ENCODE measurements at regions of chr15 and their contacts with region 1.

Region 1: GRCh38 chr15:80710635-80711554 is 15.8 kb downstream of the ABHD17C start:
- DNase-seq: peak; percentile 16
- H3K4me3 Mint-ChIP-seq: no peak overlapping the region
- H3K27ac Mint-ChIP-seq: no peak overlapping the region
- H3K4me1 Mint-ChIP-seq: peaks cover 15% of the 10 kb centered on the region
- H3K27me3 Mint-ChIP-seq: peaks cover 3% of the 10 kb centered on the region

Region 2: GRCh38 chr15:80643431-80643951 is 67.4 kb before region 1 on chr15:
- intact Hi-C with region 1: no loop called
- DNase-seq: no peak
- H3K4me3 Mint-ChIP-seq: no peak overlapping the region
- H3K27ac Mint-ChIP-seq: no peak overlapping the region
- H3K4me1 Mint-ChIP-seq: peaks cover 2% of the 10 kb centered on the region
- H3K27me3 Mint-ChIP-seq: no peaks in the 10 kb centered on the region

Region 3: GRCh38 chr15:80695104-80695910 is 15.6 kb before region 1 on chr15 and contains the start of gene ABHD17C:
- intact Hi-C with region 1: loop called (anchors 1 kb)
- DNase-seq: peak; percentile 32
- H3K4me3 Mint-ChIP-seq: peak within 1 kb of the TSS; percentile 86
- H3K27ac Mint-ChIP-seq: peak within 1 kb of the TSS; percentile 43
- H3K4me1 Mint-ChIP-seq: peaks cover 16% of the 10 kb centered on the region
- H3K27me3 Mint-ChIP-seq: peaks cover 51% of the 10 kb centered on the region
- total RNA-seq, gene ABHD17C: 4.2 and 4.3 TPM in 2 replicates

Region 4: GRCh38 chr15:80789296-80789695 is 78.4 kb after region 1 on chr15:
- intact Hi-C with region 1: loop called (anchors 5 kb)
- DNase-seq: no peak
- H3K4me3 Mint-ChIP-seq: no peak overlapping the region
- H3K27ac Mint-ChIP-seq: no peak overlapping the region
- H3K4me1 Mint-ChIP-seq: peaks cover 45% of the 10 kb centered on the region
- H3K27me3 Mint-ChIP-seq: peaks cover 14% of the 10 kb centered on the region